A673 (cell line): ENCODE measurements at regions of chr20 and their contacts with region 1.

Region 1: DNA sequence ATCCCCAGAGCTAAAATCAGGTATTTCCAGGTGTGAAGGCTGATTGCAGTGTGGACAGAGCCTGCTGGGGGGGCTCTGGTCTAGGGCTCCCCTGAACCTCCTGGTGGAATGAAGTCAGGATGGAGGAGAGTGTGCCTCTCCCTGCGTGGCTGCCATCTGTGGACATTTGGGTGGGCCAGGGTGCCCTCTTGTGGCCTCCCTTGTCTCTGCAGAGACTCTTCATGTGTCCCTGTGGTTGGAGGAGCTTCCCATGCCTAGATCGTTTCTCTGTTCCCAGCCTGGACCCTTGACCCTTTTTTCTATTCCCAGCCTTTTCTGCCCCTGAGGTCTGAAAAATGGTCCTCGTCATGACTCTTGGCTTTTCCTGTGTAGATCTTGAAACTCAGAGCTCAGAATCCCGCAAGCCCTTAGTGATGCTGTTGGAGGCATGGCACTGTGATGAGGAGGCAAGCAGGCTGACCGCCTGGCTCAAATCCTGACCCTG is 9.9 kb upstream of the PSMF1 start:
- DNase-seq: peak; percentile 58
- H3K4me3 ChIP-seq: no peak overlapping the region
- H3K27ac ChIP-seq: no peak overlapping the region
- H3K4me1 ChIP-seq: no peaks in the 10 kb centered on the region
- H3K27me3 ChIP-seq: no peaks in the 10 kb centered on the region
- CTCF ChIP-seq: peak; percentile 82

Region 2: DNA sequence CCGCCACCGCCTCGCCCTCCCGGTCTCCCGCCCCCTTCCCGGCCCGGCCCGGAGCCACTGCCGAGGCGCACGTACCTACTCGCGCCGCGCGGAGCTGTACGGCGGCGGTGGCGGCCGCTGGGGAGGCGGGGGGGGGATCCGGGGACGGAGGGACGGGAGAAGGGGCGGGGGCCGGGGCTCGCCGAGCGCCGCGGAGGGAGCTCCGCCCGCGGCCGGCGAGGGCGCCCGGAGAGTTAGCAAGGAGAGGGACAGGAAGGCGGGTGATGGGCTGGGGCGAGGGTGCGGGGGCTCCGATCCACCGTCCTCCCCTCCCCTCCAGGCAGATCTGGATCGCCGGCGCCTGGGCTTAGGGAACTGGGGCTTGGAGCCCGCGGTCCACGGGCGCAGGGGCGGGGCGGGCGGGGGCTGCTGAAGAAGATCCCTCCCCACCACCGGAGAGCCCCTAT is 76.9 kb after region 1 on chr20:
- CTCF ChIA-PET with region 1: interaction called, 12 read pairs
- POLR2A ChIA-PET with region 1: no interaction called
- intact Hi-C with region 1: no loop called
- DNase-seq: no peak
- H3K4me3 ChIP-seq: peak overlapping the region; percentile 45
- H3K27ac ChIP-seq: no peak overlapping the region
- H3K4me1 ChIP-seq: no peaks in the 10 kb centered on the region
- H3K27me3 ChIP-seq: peaks cover 26% of the 10 kb centered on the region
- CTCF ChIP-seq: no peak